Prostate gland (tissue), 2 donors: ENCODE measurements at regions of chr3 and their contacts with region 1.

Region 1: DNA sequence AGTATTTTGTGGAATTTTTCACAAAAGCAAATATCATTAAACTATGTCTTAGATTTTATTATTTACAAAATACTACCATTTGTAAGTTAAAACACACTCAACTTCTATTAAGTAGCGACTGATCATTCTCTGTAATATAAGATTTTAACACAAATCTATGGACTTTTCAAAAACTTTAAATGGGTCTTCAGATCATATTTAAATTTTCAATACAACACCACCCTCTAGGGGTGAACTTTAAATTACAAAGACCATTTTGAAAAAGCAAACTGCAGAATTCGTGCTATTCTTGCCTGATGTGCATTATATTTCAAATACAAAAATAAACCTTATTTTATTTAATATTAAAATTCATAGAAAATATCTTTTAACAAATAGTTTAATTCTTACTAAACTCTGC is 8.2 kb upstream of the VGLL4 start:
- DNase-seq: no peak
- H3K4me3 ChIP-seq: no peak overlapping the region
- H3K27ac ChIP-seq: no peak overlapping the region
- H3K4me1 ChIP-seq: no peaks in the 10 kb centered on the region
- H3K27me3 ChIP-seq: no peaks in the 10 kb centered on the region
- CTCF ChIP-seq: peak; percentile 21 to 64 (median 50)
- POLR2A ChIP-seq: no peak

Region 2: DNA sequence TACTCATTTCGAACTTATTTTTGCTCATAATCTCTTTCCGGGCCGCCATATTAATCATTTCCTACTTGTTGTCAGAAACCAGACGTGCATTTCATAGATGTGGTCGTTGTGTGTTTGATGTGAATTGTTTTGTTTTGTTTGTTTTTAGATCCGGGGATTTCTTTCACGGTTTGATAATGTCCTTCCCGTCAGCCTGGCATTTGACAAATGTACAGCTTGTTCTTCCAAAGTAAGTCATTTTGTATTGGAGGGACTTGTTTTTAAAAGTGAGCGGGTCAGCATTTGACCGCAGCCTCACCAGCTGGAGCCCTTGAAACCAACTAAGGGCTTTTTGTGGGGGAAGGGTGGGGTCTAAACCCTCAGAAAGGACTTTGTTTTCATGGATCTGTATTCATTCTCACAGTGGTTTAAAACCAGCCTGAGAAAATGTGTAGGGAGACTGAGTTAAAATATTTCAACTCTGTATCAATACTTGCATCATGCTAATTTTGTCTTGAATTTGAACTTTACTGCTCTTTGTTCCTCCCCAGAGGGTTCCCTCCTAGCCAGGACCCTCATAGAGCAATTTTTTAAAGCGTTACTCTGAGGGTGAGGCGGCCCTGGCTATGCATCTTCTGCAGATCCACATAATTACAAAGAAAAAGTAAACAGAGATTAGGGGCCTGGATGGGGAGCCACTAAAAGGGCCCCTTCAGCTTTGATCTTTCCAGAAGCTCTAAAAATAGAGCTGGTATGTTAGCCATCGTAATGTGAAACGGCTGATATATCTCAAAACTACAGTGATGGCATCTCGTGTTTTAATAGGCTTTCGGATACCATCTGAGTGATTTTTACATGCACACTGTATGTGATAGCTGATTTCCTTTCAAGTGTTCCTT is 271.8 kb before region 1 on chr3:
- intact Hi-C with region 1: loop called (anchors 2 kb)
- DNase-seq: no peak
- H3K4me3 ChIP-seq: no peak overlapping the region
- H3K27ac ChIP-seq: peak overlapping the region in 1 of 2 donors; percentile 23
- H3K4me1 ChIP-seq: no peaks in the 10 kb centered on the region
- H3K27me3 ChIP-seq: no peaks in the 10 kb centered on the region
- CTCF ChIP-seq: no peak
- POLR2A ChIP-seq: no peak

Region 3: DNA sequence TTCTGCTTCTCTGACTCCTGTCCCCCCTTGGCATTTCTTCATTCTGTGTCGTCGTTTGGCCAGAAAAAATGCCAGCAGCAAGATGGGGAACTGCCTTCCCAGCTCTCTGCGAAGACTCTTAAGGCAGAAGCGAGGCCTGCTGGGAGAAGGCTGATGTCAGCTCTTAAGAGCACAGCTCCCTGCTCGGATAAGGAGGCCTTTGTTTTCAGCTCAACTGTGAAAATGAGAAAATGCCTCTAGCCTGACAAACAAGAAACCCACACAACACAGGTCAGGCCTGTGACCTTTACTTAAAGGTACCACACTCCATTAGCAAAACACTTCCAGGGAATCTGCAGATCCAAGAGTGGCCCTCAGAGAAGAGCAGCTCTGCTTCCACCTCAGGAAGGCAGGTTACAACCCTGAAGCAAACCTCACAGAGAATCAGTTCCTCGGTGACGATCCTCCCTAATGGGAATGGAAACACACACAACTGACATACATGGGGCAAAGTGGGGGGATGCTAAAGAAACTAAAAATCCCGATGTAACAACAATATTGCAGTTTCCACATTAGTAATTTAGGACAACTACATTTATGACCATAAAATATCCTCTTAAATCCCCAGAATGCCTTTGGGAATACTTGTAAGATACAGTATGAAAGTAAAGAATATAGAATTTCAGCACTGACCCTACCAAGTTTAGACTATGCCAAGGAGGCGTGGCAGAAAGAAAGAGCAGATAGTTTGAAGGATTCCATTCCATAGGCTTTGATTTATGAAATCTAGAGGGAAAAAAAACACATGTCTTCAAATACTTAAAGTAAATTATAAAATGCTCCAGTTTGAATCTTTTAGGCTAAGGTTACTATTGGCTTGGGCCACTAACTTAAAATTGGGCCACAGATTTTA is 60.3 kb before region 1 on chr3:
- intact Hi-C with region 1: no loop called
- DNase-seq: no peak
- H3K4me3 ChIP-seq: no peak overlapping the region
- H3K27ac ChIP-seq: peak overlapping the region; percentile 48 to 65
- H3K4me1 ChIP-seq: peaks cover 12% of the 10 kb centered on the region
- H3K27me3 ChIP-seq: no peaks in the 10 kb centered on the region
- CTCF ChIP-seq: no peak
- POLR2A ChIP-seq: no peak

Region 4: DNA sequence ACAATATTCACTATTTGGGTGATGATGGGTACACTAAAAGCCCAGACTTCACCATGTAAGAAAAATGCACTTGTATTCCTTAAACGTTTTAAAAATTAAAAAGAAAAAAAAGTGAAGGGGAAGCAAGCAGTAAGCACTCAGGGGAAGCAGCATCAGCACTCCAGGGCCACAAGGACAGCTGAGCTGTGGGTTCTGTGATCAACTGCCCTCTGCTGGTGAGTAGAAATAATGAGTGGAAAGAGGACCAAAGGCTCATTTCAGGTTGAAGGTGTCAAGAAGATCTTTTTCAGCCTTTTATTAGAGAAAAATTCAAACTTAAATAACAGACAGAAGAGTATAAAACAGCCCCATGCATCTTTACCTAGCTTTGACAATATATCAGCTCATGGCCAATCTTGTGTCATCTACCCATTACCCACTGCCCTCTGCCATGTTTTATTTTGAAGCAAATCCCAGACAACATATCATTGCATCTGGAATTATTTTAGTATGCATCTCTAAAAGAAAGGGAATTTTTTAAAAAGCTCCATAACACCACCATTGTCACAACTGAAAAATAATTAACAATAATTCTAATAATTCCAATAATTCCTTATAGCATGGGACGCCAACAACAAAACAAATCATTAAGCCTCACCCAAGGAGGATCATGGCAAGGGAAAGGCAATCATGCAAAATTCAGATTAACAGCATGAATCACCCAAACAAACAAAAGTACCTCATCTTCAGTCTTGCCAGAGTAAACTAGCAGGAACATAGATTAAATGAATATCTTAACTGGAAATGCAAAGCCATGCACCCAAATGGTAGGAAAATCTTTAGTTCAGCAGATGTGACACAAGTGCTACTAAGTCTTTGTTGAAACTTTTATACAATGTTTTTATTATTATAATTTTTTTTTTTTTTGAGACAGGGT is 152.3 kb after region 1 on chr3:
- intact Hi-C with region 1: loop called (anchors 5 kb)
- DNase-seq: peak; percentile 25
- H3K4me3 ChIP-seq: no peak overlapping the region
- H3K27ac ChIP-seq: peak overlapping the region in 1 of 2 donors; percentile 45
- H3K4me1 ChIP-seq: no peaks in the 10 kb centered on the region
- H3K27me3 ChIP-seq: no peaks in the 10 kb centered on the region
- CTCF ChIP-seq: peak in 3 of 4 experiments; percentile 40 to 78 (median 72)
- POLR2A ChIP-seq: no peak

Region 5: GRCh38 chr3:11846281-11847034 is 194.6 kb after region 1 on chr3 and contains the start of gene TAMM41:
- intact Hi-C with region 1: loop called (anchors 10 kb)
- DNase-seq: peak; percentile 87
- H3K4me3 ChIP-seq: peak within 1 kb of the TSS; percentile 75 to 79
- H3K27ac ChIP-seq: peak within 1 kb of the TSS; percentile 81 to 83
- H3K4me1 ChIP-seq: peaks cover 9% of the 10 kb centered on the region
- H3K27me3 ChIP-seq: no peaks in the 10 kb centered on the region
- CTCF ChIP-seq: peak; percentile 35 to 88 (median 70)
- POLR2A ChIP-seq: peak; percentile 49
- total RNA-seq, gene TAMM41: 11.2 to 18.8 TPM

Region 6: GRCh38 chr3:12024959-12025645 is 373.2 kb after region 1 on chr3:
- intact Hi-C with region 1: no loop called
- DNase-seq: no peak
- H3K4me3 ChIP-seq: no peak overlapping the region
- H3K27ac ChIP-seq: no peak overlapping the region
- H3K4me1 ChIP-seq: no peaks in the 10 kb centered on the region
- H3K27me3 ChIP-seq: no peaks in the 10 kb centered on the region
- CTCF ChIP-seq: no peak
- POLR2A ChIP-seq: no peak